ENCODE measurements at regions of chr14 and their contacts with region 1.

Region 1: DNA sequence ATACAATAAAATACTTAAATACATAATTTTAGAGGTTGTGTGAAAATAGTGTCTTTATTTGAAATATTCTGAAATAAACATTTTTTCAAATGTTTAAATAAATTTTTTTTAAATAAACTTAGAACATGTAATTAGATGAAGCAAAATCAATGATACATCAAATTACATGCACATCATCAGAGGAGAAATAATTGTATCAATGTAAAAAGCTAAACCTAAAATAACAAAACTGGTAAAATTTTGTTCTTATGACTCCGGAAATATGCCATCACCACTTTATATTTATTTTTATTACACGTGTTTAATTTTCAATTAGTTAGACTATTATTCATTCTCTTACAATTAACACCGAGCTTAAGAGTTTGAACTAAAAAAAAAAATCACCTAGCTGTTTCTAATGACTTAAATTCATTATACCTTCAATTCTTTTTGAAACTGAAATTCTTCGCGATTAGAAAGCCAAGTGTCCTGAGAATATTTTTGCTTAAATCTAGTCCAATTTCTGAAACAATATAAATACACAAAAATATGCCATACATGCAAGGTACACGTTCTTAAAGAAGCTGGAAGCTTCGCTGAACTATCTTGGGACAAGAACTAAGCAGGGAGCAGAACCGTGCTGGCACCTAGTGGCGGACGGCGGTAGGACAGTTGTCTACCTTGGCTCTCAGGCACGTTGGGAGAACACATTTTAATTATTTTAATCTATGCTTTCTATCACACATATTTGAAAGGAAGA is 230.5 kb downstream of the SLC25A21 start:
- DNase-seq: peak; percentile 52 to 86 (median 81)
- ATAC-seq: peak; percentile 75
- H3K4me3 ChIP-seq: no peak overlapping the region
- H3K27ac ChIP-seq: no peak overlapping the region
- H3K4me1 ChIP-seq: no peaks in the 10 kb centered on the region
- H3K27me3 ChIP-seq: peaks cover 2% of the 10 kb centered on the region

Region 2: GRCh38 chr14:36553656-36554260 is 388.2 kb before region 1 on chr14:
- intact Hi-C with region 1: loop called in 1 of 4 experiments (anchors 10 kb)
- DNase-seq: no peak
- ATAC-seq: peak in 1 of 2 donors; percentile 46
- H3K4me3 ChIP-seq: no peak overlapping the region
- H3K27ac ChIP-seq: no peak overlapping the region
- H3K4me1 ChIP-seq: no peaks in the 10 kb centered on the region
- H3K27me3 ChIP-seq: peaks cover 2% of the 10 kb centered on the region

Region 3: DNA sequence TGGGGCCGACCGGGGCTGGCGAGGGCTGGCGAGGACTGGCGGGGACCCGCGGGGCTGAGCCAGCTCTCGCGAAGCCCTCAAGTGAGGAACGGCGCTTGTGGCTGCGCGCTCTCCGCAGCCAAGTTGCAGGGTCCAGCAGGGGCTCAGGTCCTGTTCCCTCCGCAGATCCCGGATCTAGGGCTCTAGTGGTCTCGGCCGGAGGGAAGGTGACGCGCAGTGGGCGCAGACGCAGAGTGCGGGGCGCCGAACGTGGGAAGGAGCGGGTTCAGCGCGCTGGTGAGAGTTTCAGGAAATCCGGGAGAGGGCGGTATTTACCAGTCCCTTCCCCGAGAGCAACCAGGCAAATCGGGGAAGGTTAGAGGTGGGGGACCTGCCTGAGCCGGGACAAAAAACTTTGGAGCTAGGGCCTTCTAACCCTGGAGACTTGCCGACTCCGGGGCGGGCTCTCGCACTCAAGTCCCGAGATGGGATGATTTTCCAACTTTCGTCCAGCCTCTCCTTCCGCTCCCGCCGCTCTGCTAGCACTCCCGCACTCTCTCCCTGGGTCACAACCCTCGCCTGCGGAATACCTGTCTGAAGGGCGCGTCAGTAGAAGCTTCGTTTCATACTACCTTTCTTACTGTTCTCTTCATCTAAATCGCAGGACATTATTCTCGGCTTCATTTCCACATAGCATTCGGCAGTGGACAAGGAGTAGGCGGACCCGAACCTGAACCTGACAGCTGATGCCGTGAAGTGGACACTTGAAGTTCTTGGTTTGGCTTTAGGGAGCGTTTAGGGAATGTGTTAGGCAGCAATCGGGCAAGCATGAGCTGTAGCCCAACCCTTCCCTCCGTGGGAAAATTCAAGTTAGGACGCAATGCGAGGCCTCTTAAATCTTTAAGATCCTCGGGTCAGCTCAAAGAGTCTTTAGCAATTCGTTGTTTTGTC is 293.9 kb before region 1 on chr14:
- intact Hi-C with region 1: loop called (anchors 5 to 10 kb)
- DNase-seq: peak in 1 of 3 donors; percentile 52
- ATAC-seq: peak; percentile 74 to 78
- H3K4me3 ChIP-seq: peak overlapping the region; percentile 37
- H3K27ac ChIP-seq: no peak overlapping the region
- H3K4me1 ChIP-seq: peaks cover 3% of the 10 kb centered on the region
- H3K27me3 ChIP-seq: peaks cover 10% of the 10 kb centered on the region

Region 4: GRCh38 chr14:36998686-36999085 is 56.7 kb after region 1 on chr14:
- intact Hi-C with region 1: no loop called
- DNase-seq: no peak
- ATAC-seq: no peak
- H3K4me3 ChIP-seq: no peak overlapping the region
- H3K27ac ChIP-seq: no peak overlapping the region
- H3K4me1 ChIP-seq: no peaks in the 10 kb centered on the region
- H3K27me3 ChIP-seq: no peaks in the 10 kb centered on the region

Region 5: DNA sequence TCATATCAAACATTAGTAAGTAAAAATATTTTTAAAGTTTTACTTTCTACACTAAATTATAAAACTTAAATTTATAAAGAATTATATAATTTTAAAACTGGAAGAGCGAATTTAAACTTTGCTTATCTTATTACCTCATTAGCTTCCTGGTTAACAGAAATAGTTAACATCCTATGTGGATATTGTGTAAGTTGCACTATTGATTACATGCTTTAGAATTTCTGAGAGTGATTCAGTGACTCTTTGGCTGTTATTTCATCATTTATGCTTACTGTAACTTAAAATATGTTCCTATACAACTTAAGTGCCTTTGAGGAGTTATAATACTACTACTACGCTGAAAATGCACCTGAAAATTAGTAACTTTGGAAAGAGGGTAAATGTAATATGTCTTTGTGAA is 551.7 kb after region 1 on chr14:
- intact Hi-C with region 1: no loop called
- DNase-seq: no peak
- ATAC-seq: no peak
- H3K4me3 ChIP-seq: no peak overlapping the region
- H3K27ac ChIP-seq: no peak overlapping the region
- H3K4me1 ChIP-seq: no peaks in the 10 kb centered on the region
- H3K27me3 ChIP-seq: no peaks in the 10 kb centered on the region